CD4-positive, alpha-beta memory T cell (primary cell): ENCODE measurements at regions of chr12 and their contacts with region 1.

Region 1: DNA sequence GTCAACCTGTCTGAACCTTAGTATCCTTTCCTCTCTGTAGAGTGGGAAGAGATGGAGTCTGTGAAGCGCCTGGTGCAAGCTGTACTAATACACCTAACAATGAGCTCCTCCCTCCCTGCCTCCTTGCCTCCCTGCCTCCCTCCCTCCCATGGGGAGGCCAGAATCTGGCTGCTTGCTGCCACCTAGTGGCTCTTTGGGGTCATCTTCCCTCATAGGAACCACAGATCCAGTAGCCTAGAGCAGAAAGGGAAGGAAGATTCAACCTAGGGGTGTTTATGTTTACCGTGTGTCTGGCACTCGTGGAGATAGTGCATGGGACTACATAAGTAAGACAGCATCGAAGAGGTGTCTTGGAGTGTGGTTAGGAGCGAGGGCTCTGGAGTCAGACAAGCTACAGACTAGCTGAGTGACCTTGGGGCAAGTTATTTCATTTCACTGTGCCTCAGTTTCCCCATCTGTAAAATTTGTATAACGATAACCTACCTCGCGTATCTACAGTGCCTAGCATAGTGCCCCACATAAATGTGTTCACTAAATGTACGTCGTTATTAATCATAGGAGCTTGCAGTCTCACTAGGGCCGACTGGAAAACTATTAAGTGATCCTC is 35.5 kb upstream of the TSPAN9 start:
- DNase-seq: peak in 4 of 5 donors; percentile 35 to 47 (median 39)
- H3K4me3 ChIP-seq: no peak overlapping the region
- H3K4me3 Mint-ChIP-seq: no peak overlapping the region
- H3K27ac ChIP-seq: no peak overlapping the region
- H3K27ac Mint-ChIP-seq: peak overlapping the region in 1 of 7 donors; percentile 62
- H3K4me1 ChIP-seq: no peaks in the 10 kb centered on the region
- H3K4me1 Mint-ChIP-seq: peaks cover 0 to 1% (median 0%) of the 10 kb centered on the region in 4 donors
- H3K27me3 ChIP-seq: no peaks in the 10 kb centered on the region
- H3K27me3 Mint-ChIP-seq: peaks cover 26 to 31% of the 10 kb centered on the region in 2 donors

Region 2: DNA sequence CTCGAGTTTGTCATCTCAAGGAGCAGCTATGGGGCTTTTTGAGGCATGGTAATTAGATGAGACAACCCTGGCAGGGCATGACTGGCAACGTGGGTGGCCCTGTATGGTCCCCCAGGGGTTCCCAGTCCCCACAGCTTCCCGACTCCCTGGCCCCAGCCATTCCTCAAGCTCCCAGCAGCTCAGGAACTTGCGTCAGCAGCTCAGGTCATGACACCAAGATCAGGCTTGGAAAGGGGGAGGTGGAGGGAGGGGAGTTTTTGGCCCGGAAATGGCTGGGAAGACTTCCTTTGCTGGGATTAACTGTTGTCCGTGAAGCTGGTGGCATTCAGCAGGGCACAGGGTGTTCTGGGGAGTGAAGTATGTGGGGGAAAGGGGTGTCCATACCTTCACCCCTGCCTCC is 196.4 kb before region 1 on chr12:
- CTCF ChIA-PET with region 1: interaction called, 3 read pairs
- POLR2A ChIA-PET with region 1: no interaction called
- intact Hi-C with region 1: loop called (anchors 10 kb)
- DNase-seq: no peak
- H3K4me3 ChIP-seq: no peak overlapping the region
- H3K4me3 Mint-ChIP-seq: no peak overlapping the region
- H3K27ac ChIP-seq: no peak overlapping the region
- H3K27ac Mint-ChIP-seq: no peak overlapping the region
- H3K4me1 ChIP-seq: no peaks in the 10 kb centered on the region
- H3K4me1 Mint-ChIP-seq: peaks cover 0 to 3% (median under 1%) of the 10 kb centered on the region in 4 donors
- H3K27me3 ChIP-seq: no peaks in the 10 kb centered on the region
- H3K27me3 Mint-ChIP-seq: no peaks in the 10 kb centered on the region

Region 3: DNA sequence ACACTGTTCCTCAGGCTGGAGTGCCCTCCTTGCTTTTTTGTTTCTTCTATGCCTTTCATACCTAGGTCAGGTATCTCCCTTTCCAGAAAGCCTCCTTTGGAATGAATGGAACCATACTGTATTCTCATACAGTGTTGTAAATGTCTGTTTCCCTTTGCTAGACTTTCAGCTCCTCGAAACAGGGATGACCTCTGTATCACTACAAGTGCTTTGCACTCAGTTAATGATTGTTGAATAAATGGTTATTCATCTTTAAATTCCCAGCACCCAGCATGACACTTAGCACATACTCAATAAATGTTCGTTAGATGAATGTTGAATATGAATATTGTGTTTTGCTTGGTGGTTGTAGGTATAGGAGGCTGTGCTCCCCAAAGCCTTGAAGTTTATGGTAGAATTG is 156.9 kb before region 1 on chr12:
- CTCF ChIA-PET with region 1: interaction called, 3 read pairs
- POLR2A ChIA-PET with region 1: no interaction called
- intact Hi-C with region 1: loop called (anchors 2 kb)
- DNase-seq: no peak
- H3K4me3 ChIP-seq: no peak overlapping the region
- H3K4me3 Mint-ChIP-seq: peak overlapping the region in 1 of 8 donors; percentile 24
- H3K27ac ChIP-seq: no peak overlapping the region
- H3K27ac Mint-ChIP-seq: peak overlapping the region in 3 of 7 donors; percentile 2 to 78 (median 71)
- H3K4me1 ChIP-seq: peaks cover 15% of the 10 kb centered on the region
- H3K4me1 Mint-ChIP-seq: peaks cover 12 to 29% (median 21%) of the 10 kb centered on the region in 4 donors
- H3K27me3 ChIP-seq: no peaks in the 10 kb centered on the region
- H3K27me3 Mint-ChIP-seq: no peaks in the 10 kb centered on the region

Region 4: GRCh38 chr12:2963760-2964292 is 77.8 kb before region 1 on chr12:
- CTCF ChIA-PET with region 1: no interaction called
- POLR2A ChIA-PET with region 1: no interaction called
- intact Hi-C with region 1: no loop called
- DNase-seq: no peak
- H3K4me3 ChIP-seq: no peak overlapping the region
- H3K4me3 Mint-ChIP-seq: no peak overlapping the region
- H3K27ac ChIP-seq: no peak overlapping the region
- H3K27ac Mint-ChIP-seq: no peak overlapping the region
- H3K4me1 ChIP-seq: peaks cover 3% of the 10 kb centered on the region
- H3K4me1 Mint-ChIP-seq: peaks cover 7 to 16% (median 11%) of the 10 kb centered on the region in 4 donors
- H3K27me3 ChIP-seq: peaks cover 9% of the 10 kb centered on the region
- H3K27me3 Mint-ChIP-seq: peaks cover 20 to 35% of the 10 kb centered on the region in 2 donors

Region 5: DNA sequence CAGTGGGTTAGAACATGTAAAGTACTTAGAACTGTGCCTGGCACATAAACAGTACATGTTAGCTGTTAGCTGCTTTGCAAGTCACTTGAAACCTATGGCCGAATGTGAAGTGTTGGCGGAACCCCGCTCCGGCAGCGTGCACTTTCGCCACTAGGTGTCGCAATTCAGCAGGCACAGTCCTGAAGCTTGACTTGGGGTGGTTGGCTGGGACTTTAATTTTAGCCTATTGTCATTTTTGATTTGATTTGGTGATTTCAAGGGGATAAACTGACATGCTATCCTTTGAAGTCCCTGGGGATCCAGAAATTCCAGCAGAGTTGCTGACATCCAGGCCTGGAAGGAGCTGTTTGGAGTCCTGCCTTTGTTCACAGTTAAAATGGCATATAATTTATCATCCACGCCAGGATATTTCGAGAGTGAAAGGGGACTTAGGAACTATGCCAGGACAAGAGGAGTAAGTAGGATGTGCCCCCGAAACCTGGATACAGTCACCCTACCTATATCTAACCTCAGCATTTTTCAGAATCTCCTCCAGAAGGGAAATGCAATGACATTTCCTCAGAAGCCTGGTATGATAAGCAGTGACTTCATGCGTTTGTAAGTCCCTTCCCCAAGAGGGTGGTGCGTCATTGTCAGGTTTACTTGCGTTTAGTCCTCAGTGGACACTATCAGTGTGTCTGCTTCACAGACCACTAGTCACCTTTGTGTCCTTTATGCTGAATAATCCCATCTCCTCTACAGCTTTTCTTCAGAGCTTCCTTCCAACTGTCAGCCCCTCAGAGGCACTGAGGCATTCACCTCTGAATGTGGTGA is 32.0 kb after region 1 on chr12:
- CTCF ChIA-PET with region 1: interaction called, 3 read pairs
- POLR2A ChIA-PET with region 1: no interaction called
- intact Hi-C with region 1: loop called (anchors 2 kb)
- DNase-seq: peak; percentile 74 to 78 (median 77)
- H3K4me3 ChIP-seq: no peak overlapping the region
- H3K4me3 Mint-ChIP-seq: peak overlapping the region in 2 of 8 donors; percentile 36 to 82
- H3K27ac ChIP-seq: no peak overlapping the region
- H3K27ac Mint-ChIP-seq: peak overlapping the region in 1 of 7 donors; percentile 67
- H3K4me1 ChIP-seq: peaks cover 9% of the 10 kb centered on the region
- H3K4me1 Mint-ChIP-seq: peaks cover 2 to 15% (median 12%) of the 10 kb centered on the region in 4 donors
- H3K27me3 ChIP-seq: no peaks in the 10 kb centered on the region
- H3K27me3 Mint-ChIP-seq: peaks cover 3 to 8% of the 10 kb centered on the region in 2 donors